ENCODE measurements at regions of chr10 and their contacts with region 1.

Region 1: DNA sequence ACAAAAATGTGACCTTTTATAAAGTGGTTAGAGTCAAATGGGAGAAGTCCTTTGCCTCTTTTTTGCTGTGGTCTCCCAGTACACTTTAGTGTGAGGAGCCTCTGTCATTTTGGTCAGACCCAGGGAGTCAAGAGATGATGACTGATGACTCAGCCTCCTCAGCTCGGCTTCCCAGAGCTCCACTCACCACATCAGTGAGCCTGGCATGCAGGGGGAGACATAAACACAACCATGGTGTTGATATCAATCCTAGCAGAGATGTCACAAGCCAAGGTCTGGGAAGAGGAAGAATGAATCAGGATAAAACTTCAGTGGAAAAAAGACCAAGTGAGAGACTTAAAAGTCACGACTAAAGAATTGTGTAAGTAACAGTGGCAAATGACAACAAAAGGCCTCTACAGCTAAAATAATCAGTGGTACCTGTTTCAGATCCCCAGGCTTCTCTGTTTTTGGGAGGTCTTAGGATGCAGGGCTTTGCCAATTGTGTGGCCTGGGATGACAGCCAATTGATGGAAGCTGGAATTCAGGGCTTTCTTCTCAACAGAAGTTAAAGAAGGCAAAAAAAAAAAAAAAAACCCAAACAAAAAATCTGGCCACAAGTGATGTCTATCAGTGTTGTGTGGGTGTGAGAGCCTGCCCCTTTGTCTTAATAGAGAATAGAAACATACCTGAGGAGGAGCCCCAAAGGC is 50.2 kb downstream of the TFAM start:
- DNase-seq: peak; percentile 91
- H3K4me3 ChIP-seq: no peak overlapping the region
- H3K27ac ChIP-seq: peak overlapping the region; percentile 75
- H3K4me1 ChIP-seq: peaks cover 50% of the 10 kb centered on the region
- H3K27me3 ChIP-seq: no peaks in the 10 kb centered on the region
- CTCF ChIP-seq: peak; percentile 14 to 30

Region 2: DNA sequence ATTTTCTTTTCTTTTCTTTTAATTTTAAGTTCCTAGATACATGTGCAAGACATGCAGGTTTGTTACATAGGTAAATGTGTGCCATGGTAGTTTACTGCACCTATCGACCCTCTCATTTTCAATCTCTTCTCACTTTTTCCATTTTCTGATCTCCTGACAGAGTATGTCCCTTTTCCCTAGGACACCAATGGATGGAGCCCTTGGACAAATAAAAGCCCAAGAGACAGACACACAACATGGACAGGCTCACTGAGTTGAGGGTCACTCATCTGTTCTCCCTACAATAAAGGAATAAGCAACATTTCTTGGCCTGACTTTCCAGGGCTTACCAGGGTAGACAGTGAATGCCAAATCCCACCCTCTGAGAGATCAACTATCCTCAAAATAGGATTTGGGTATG is 115.8 kb before region 1 on chr10:
- CTCF ChIA-PET with region 1: no interaction called
- dilution Hi-C with region 1: no loop called
- in situ Hi-C with region 1: no loop called
- intact Hi-C with region 1: no loop called
- DNase-seq: no peak
- H3K4me3 ChIP-seq: no peak overlapping the region
- H3K27ac ChIP-seq: no peak overlapping the region
- H3K4me1 ChIP-seq: no peaks in the 10 kb centered on the region
- H3K27me3 ChIP-seq: no peaks in the 10 kb centered on the region
- CTCF ChIP-seq: no peak

Region 3: GRCh38 chr10:58457761-58458616 is 22.5 kb after region 1 on chr10:
- CTCF ChIA-PET with region 1: no interaction called
- dilution Hi-C with region 1: no loop called
- in situ Hi-C with region 1: no loop called
- intact Hi-C with region 1: no loop called
- DNase-seq: peak; percentile 38
- H3K4me3 ChIP-seq: no peak overlapping the region
- H3K27ac ChIP-seq: no peak overlapping the region
- H3K4me1 ChIP-seq: peaks cover 8% of the 10 kb centered on the region
- H3K27me3 ChIP-seq: no peaks in the 10 kb centered on the region
- CTCF ChIP-seq: no peak

Region 4: DNA sequence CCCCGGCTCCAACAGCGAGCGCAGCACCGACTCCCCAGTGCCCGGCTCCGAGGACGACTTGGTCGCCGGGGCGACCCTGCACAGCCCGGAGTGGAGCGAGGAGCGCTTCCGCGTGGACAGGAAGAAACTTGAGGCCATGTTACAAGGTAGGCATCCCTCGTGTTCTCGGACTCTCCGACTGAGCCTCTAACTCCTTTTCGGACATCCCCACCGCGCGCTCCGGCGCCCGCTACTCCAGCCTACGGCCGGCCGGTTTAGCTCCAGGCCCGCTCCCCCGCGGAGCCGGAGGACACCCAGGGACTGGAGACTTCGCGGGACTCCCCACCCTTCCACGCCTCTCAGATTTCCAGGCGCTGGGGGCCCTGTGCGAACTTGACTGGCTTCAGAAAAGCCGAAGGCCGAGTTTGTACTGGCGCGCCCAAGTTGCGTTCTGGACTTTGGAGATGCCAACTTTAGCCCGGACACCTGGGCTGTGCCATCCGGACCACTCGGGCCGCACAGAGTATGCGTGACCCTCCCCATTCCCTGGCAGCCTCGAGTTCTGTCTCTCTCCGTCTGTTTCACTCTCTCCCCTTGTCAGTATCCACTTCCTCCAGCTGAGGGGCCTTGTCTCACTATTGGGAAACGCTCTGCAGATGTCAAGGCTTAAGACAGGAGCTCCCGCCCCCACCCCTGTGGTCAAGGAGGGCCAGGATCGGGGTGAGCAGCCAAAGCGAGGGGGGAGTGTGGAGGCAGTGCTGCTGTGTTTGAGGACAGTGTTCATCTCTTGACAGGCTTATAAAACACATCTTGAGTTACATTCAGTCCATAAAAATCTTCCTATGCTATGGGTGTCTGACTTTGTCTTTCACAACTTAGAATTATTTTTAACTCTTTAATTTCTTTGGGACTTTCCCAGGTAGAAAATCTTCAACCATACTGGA is 78.0 kb after region 1 on chr10:
- CTCF ChIA-PET with region 1: no interaction called
- dilution Hi-C with region 1: no loop called
- in situ Hi-C with region 1: no loop called
- intact Hi-C with region 1: loop called (anchors 1 kb)
- DNase-seq: peak; percentile 62
- H3K4me3 ChIP-seq: peak overlapping the region; percentile 84 to 95 (median 90)
- H3K27ac ChIP-seq: peak overlapping the region; percentile 72
- H3K4me1 ChIP-seq: peaks cover 22% of the 10 kb centered on the region
- H3K27me3 ChIP-seq: no peaks in the 10 kb centered on the region
- CTCF ChIP-seq: no peak

Region 5: DNA sequence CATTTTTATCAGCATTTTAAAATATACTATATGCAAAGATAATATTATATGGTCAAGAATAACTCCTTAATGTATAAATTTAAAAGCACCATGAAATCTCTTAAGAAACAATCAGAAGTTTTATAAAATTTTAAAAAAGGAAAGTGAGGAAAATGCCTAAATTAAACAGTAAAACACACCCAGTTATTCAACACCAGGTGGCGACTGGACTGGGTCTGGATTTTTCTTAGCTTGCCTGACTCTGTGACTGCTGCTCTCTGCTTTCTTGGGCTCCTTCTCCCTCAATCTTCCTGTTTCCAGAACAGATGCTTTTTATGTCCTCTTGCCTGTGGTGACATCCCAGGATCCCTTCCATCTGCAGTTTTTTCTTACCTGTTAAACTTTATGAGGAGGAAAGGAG is 277.5 kb after region 1 on chr10:
- CTCF ChIA-PET with region 1: no interaction called
- dilution Hi-C with region 1: no loop called
- in situ Hi-C with region 1: no loop called
- intact Hi-C with region 1: no loop called
- DNase-seq: no peak
- H3K4me3 ChIP-seq: no peak overlapping the region
- H3K27ac ChIP-seq: no peak overlapping the region
- H3K4me1 ChIP-seq: no peaks in the 10 kb centered on the region
- H3K27me3 ChIP-seq: no peaks in the 10 kb centered on the region
- CTCF ChIP-seq: peak in 1 of 2 donors; percentile 27